H1 (cell line): ENCODE measurements at regions of chr1 and their contacts with region 1.

Region 1: DNA sequence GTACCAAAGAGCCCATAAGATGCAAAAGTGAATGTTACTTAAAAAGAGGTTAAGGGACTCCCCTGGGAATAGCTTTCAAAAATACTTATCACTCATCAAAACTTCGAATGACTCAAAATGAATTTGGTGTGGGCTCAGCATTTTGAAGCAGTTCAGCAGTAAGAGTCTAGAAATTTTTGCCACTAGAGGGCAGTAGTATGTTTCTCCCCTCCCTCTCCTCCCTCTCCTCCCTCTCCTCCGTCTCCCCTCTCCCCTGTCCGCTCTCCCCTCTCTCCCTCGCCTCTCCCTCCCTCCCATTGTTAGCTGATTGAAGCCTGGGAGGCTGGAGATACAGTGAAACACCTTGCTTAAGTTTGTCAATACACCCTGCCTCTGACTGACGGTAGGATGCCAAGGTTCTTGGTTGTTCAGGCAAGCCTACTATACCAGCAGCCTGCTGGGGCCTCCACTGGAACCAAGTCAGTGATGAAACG is 70.8 kb upstream of the TENT5C start:
- DNase-seq: peak; percentile 34 to 59
- H3K4me3 ChIP-seq: no peak overlapping the region
- H3K27ac ChIP-seq: no peak overlapping the region
- H3K4me1 ChIP-seq: no peaks in the 10 kb centered on the region
- H3K27me3 ChIP-seq: no peaks in the 10 kb centered on the region
- CTCF ChIP-seq: peak; percentile 28 to 72 (median 47)
- EP300 ChIP-seq: no peak
- POLR2A ChIP-seq: no peak
- RAD21 ChIP-seq: peak; percentile 65 to 67

Region 2: DNA sequence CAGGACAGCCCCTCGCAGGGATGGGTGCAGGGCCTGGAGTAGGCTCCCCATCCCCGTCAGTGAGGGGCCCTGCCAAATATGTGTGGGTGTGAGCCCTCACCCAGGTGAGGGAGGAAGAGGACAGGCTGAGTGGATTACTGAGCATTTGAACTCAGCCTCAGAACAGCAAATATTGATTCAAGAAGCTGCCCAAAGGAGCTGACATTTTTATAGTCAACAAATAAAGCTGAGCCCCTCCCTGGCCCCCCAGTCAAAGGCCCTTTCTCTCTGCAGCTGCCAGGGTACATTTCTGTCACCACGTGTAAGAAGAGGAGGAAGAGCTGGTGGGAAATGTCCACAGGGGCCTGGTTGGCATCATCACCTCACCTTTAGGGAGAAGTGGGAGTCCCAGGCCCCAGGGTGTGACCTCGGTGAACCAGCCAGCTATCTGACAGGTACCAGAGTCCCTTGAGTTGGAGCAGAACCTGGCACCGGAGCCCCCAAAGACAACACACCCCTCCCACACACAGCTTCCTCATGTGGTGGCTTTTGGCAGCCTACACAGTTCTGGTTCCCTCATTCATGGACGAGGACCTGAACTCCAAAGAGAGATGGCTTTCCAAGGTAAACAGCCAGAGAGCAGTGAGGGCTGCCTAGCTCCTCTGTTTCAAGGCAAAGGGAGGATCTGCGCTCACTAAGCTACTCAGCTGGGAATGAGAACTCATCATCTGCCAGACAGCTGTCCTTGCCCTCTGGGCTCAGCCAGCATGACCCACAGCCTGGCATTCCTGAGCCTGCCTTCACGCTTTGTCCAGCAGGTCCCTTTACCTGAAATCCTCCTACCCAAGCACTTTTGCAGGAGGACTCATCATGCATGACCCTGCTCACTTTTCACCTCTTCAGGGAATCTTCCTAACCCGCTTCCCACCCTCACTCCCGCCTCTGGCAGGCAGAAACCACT is 27.8 kb after region 1 on chr1:
- CTCF ChIA-PET with region 1: interaction called, 17 read pairs
- POLR2A ChIA-PET with region 1: no interaction called
- DNase-seq: peak in 1 of 2 experiments; percentile 24
- H3K4me3 ChIP-seq: no peak overlapping the region
- H3K27ac ChIP-seq: no peak overlapping the region
- H3K4me1 ChIP-seq: no peaks in the 10 kb centered on the region
- H3K27me3 ChIP-seq: no peaks in the 10 kb centered on the region
- CTCF ChIP-seq: no peak
- EP300 ChIP-seq: no peak
- POLR2A ChIP-seq: no peak
- RAD21 ChIP-seq: no peak

Region 3: GRCh38 chr1:117582451-117582850 is 47.4 kb after region 1 on chr1:
- CTCF ChIA-PET with region 1: interaction called, 10 read pairs
- POLR2A ChIA-PET with region 1: no interaction called
- DNase-seq: no peak
- H3K4me3 ChIP-seq: no peak overlapping the region
- H3K27ac ChIP-seq: no peak overlapping the region
- H3K4me1 ChIP-seq: no peaks in the 10 kb centered on the region
- H3K27me3 ChIP-seq: no peaks in the 10 kb centered on the region
- CTCF ChIP-seq: no peak
- EP300 ChIP-seq: no peak
- POLR2A ChIP-seq: no peak
- RAD21 ChIP-seq: no peak

Region 4: DNA sequence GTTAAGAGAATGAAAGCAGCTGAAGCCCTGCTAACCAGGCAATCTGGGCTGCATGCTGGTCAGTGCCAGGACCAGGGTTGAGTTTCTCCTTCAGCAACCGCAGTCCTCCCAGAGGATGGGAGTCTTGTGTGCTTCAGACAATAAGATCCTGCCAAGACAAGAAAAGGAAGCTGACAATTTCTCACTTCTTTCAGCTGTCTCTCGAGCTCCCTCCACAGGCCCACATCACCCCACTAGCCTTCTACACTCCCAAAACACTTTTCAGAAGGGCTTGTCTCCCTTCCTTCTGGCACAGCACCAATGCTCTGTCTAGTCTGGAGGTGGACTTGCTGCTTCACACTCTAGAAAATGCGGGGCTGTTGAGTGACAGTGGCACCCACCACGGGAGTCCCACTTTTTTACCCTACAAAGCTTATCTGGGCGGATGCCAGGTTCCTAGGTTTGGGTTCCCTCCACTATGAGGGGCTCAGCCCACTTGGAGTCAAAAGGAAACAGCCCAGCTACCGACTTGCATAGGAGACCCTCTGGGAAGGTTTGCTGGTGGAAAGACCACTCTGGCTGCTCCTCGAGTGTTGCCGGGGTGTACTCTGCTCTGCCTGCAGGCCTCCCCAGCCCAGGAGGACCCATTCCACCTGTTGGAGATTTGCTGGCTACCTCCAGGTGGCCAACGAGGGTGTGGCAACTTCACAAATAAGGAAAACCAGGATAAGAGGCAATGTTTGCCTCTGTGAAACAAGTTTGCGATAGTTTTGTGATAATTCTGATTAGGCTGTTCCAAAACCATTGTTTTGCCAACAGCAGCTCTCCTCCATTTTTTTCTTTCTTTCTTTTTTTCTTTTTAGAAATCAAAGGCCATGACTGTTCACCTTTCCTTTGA is 139.7 kb after region 1 on chr1:
- CTCF ChIA-PET with region 1: interaction called, 10 read pairs
- POLR2A ChIA-PET with region 1: no interaction called
- DNase-seq: no peak
- H3K4me3 ChIP-seq: no peak overlapping the region
- H3K27ac ChIP-seq: no peak overlapping the region
- H3K4me1 ChIP-seq: peaks cover 0 to 2% (median 0%) of the 10 kb centered on the region in 4 experiments; a peak in 3 of 7 replicates
- H3K27me3 ChIP-seq: no peaks in the 10 kb centered on the region
- CTCF ChIP-seq: peak in 1 of 3 experiments; percentile 37; a peak in 2 of 4 replicates
- EP300 ChIP-seq: no peak
- POLR2A ChIP-seq: no peak
- RAD21 ChIP-seq: peak; percentile 32 to 41; a peak in 3 of 4 replicates

Region 5: DNA sequence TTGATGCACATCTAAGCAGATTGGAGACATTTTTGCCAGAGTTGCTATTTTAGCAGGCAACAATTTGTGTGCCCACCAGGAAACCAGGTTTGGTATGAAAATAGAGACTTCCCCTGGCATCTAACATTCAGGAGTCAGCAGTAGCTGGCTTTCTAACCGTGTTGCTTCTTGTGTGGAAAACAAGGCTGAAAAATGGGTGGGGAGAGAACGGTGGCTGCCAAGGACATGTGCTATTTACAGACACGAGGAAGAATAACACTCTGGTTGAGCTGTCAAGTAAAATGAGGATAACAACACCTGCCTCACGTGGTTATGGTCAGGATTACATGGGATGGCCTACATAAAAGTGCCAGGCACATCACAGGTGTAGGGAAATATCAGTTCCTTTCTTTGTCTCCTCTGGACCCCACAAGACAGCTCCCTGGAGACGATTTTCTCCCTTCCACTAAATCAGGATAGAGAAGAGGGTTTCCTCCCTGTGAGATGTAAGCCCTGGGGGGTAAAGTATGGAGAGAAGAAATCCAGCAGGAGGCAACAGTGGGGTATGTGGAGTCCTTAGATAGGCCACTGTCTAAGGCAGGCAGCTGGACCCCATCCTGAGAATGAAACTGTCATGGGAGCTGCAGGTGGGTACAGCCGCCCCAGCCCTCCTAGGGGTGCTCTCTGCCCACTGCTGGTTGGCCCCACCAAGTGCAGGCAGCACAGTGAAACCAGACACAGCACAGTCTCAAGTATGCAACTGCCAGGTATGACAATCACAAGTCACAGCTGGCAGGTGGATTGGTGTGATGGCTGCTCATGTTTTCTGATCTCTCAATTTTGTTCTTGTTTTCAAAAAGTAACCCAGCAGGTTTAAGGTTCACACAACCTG is 151.1 kb after region 1 on chr1:
- CTCF ChIA-PET with region 1: interaction called, 14 read pairs
- POLR2A ChIA-PET with region 1: no interaction called
- DNase-seq: no peak
- H3K4me3 ChIP-seq: no peak overlapping the region
- H3K27ac ChIP-seq: no peak overlapping the region
- H3K4me1 ChIP-seq: no peaks in the 10 kb centered on the region
- H3K27me3 ChIP-seq: no peaks in the 10 kb centered on the region
- CTCF ChIP-seq: peak; percentile 9 to 34 (median 27); a peak in 2 of 4 replicates
- EP300 ChIP-seq: no peak
- POLR2A ChIP-seq: no peak
- RAD21 ChIP-seq: peak; percentile 33 to 37; a peak in 3 of 4 replicates